ENCODE measurements at regions of chr10 and their contacts with region 1.

Region 1: GRCh38 chr10:22655311-22655981 is 58.9 kb downstream of the PIP4K2A start:
- DNase-seq: peak in 7 of 9 experiments; percentile 29 to 84 (median 67)
- ATAC-seq: peak; percentile 72
- H3K4me3 ChIP-seq: peak overlapping the region; percentile 3 to 9
- H3K4me3 Mint-ChIP-seq: peak overlapping the region; percentile 72
- H3K27ac ChIP-seq: peak overlapping the region; percentile 19 to 74
- H3K27ac Mint-ChIP-seq: peak overlapping the region; percentile 96
- H3K4me1 ChIP-seq: peaks cover 98% of the 10 kb centered on the region
- H3K4me1 Mint-ChIP-seq: peaks cover 92% of the 10 kb centered on the region
- H3K27me3 ChIP-seq: no peaks in the 10 kb centered on the region
- H3K27me3 Mint-ChIP-seq: no peaks in the 10 kb centered on the region
- CTCF ChIP-seq: no peak

Region 2: DNA sequence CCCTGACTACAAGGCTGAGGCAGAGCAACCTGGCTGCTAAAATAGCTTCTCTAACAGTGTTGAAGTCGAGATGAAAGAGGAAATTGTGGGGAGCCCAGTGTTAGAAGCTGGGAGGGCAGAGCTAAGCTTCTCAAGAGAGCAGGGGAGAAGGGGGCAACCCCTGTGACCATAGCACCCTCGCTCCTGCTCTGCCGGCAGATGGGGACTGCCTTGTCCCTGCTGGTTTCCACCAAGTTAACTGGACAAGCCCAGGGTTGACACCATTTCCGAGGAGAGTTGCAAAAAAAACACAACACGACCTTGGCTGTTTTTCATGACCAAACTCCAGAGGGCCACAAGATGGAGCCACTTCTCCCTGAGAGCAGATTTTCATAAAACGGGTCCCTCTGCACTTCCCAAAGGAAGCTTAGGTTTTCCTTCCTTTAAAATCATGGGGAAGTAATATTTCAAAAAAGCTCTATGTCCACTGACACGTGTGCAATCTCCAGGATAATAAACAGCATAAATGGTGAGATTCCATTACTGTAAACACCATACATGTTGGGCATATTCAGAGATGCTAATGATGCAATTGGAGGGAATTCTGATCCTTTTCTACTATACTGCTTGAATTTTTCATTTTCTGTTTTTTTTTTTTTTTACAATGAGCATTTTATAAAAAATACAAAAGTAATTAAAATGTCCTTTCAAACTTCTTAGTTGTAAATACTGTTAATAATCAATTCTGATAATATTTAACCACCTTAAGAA is 81.5 kb before region 1 on chr10:
- CTCF ChIA-PET with region 1: interaction called, 15 read pairs
- POLR2A ChIA-PET with region 1: no interaction called
- intact Hi-C with region 1: no loop called
- DNase-seq: peak in 7 of 9 experiments; percentile 2 to 82 (median 43)
- ATAC-seq: peak; percentile 64
- H3K4me3 ChIP-seq: no peak overlapping the region
- H3K4me3 Mint-ChIP-seq: peak overlapping the region; percentile 71
- H3K27ac ChIP-seq: peak overlapping the region in 1 of 2 experiments; percentile 63
- H3K27ac Mint-ChIP-seq: peak overlapping the region; percentile 94
- H3K4me1 ChIP-seq: peaks cover 35% of the 10 kb centered on the region
- H3K4me1 Mint-ChIP-seq: peaks cover 73% of the 10 kb centered on the region
- H3K27me3 ChIP-seq: no peaks in the 10 kb centered on the region
- H3K27me3 Mint-ChIP-seq: no peaks in the 10 kb centered on the region
- CTCF ChIP-seq: peak; percentile 79

Region 3: GRCh38 chr10:22666287-22667092 is 11.0 kb after region 1 on chr10:
- CTCF ChIA-PET with region 1: interaction called, 19 read pairs
- POLR2A ChIA-PET with region 1: interaction called, 36 read pairs
- intact Hi-C with region 1: loop called (anchors 1 kb)
- DNase-seq: peak; percentile 30 to 92 (median 67)
- ATAC-seq: peak; percentile 84
- H3K4me3 ChIP-seq: peak overlapping the region; percentile 29 to 42
- H3K4me3 Mint-ChIP-seq: peak overlapping the region; percentile 79
- H3K27ac ChIP-seq: peak overlapping the region; percentile 41 to 67
- H3K27ac Mint-ChIP-seq: peak overlapping the region; percentile 90
- H3K4me1 ChIP-seq: peaks cover 87% of the 10 kb centered on the region
- H3K4me1 Mint-ChIP-seq: peaks cover 83% of the 10 kb centered on the region
- H3K27me3 ChIP-seq: no peaks in the 10 kb centered on the region
- H3K27me3 Mint-ChIP-seq: no peaks in the 10 kb centered on the region
- CTCF ChIP-seq: no peak

Region 4: DNA sequence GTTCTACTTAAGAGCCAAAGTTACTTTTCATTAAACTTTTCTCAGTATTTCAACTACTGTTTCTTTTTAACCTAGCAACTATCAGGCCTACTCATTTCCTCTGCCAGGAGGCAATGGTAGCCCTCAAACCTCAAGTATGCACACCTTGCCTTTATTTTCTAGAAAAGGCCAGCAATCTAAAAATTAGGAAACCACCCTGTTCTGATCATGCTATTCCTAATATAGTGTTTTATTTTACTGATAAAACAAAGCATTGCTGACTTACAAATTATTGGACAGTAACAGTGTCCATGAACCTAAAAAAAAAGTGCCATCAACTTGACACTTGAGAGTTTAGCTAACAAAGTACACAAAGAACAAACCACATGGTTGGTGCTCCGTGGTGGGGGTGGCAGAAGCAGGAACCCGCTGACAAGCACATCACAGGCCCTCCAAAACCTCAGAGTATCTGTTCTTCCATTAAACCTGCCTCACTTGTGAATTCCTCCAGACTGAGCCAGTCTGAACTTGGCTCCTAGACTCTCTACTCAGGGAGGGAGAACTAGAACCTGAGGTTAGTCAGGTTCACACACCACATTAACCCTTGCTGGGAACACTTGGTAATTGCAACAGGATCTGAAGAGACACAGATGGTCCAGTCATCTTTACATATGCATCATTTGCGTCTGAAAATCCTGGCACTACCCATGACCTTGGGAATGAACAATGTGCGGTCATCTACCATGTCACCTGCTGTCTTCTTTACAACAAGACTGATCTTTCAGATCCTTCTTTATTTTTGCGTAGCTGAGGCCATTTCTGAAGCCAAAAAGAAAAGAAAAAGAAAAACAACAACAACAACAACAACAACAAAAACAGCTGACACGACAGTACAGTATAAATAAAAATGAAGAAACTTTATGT is 27.0 kb after region 1 on chr10:
- CTCF ChIA-PET with region 1: interaction called, 12 read pairs
- POLR2A ChIA-PET with region 1: interaction called, 12 read pairs
- intact Hi-C with region 1: loop called (anchors 2 kb)
- DNase-seq: peak; percentile 31 to 89 (median 71)
- ATAC-seq: peak; percentile 51
- H3K4me3 ChIP-seq: peak overlapping the region; percentile 4 to 34
- H3K4me3 Mint-ChIP-seq: peak overlapping the region; percentile 68
- H3K27ac ChIP-seq: peak overlapping the region; percentile 75 to 85
- H3K27ac Mint-ChIP-seq: peak overlapping the region; percentile 98
- H3K4me1 ChIP-seq: peaks cover 97% of the 10 kb centered on the region
- H3K4me1 Mint-ChIP-seq: peaks cover 94% of the 10 kb centered on the region
- H3K27me3 ChIP-seq: no peaks in the 10 kb centered on the region
- H3K27me3 Mint-ChIP-seq: no peaks in the 10 kb centered on the region
- CTCF ChIP-seq: no peak

Measured in CD8-positive, alpha-beta T cell (primary cell).